Activated T-helper 2 cell treated with anti-CD3 and anti-CD28 coated beads, Interferon-gamma antibody, Interleukin-2, Interleukin-4, amounts not matched to agents 10 μg/mL and 5 μg/mL and 100 μg/mL, durations not matched to agents 14 hours and 24 hours and 36 hours (primary cell): ENCODE measurements at regions of chr10 and their contacts with region 1.

Region 1: GRCh38 chr10:102917962-102918816 is at the start of gene CNNM2:
- DNase-seq: peak; percentile 100
- H3K4me3 Mint-ChIP-seq: peak within 1 kb of the TSS; percentile 92
- H3K27ac Mint-ChIP-seq: peak within 1 kb of the TSS; percentile 88
- H3K4me1 Mint-ChIP-seq: peaks cover 47% of the 10 kb centered on the region
- H3K27me3 Mint-ChIP-seq: peaks cover 3% of the 10 kb centered on the region
- total RNA-seq, gene CNNM2: 7.2 and 7.5 TPM in 2 replicates

Region 2: DNA sequence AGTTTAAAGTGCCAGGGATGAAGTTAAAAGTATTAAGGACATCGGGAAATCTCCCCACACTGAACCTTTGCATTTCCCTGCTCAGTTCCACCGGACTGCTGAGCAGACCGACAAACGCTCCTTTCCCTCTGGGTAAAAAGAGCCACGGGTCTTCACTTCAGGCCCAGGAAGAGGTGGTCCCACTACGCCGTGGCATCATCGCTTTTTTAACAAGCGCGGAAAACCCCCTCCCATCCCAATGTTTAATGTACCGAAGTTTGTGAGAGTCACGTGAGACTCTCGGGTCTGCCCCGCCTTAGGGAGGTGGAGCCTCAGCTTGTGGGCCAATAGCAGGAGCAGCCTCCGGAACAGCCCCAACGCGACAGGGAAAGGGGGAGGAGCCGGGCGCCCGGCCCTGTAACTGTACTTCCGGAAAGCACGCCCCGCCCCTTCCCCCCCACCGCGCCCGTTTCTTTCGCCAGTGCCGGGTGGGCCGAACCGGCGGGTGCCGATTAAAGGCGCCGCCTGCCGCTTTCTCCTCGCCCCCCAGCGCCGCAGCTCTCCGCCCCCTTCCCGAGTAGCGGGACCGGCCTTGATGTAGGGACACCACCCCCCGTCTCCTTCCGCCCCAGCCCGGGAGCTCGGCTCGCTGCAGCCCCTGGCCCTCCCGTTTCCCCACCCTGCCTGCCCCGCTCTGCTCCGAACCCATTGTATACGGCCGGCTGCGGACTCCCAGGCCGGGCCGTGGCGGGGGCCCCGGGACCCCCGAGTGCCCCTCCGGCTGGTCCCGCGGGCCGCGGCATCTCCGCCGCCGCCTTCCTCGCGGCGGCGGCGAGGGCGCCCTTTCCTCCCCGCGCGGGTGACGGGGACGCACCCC is 276.1 kb before region 1 on chr10:
- intact Hi-C with region 1: loop called (anchors 5 kb)
- DNase-seq: peak; percentile 94
- H3K4me3 Mint-ChIP-seq: peak overlapping the region; percentile 85
- H3K27ac Mint-ChIP-seq: peak overlapping the region; percentile 88
- H3K4me1 Mint-ChIP-seq: peaks cover 18% of the 10 kb centered on the region
- H3K27me3 Mint-ChIP-seq: no peaks in the 10 kb centered on the region

Region 3: GRCh38 chr10:102853944-102854694 is 64.1 kb before region 1 on chr10 and contains the start of gene BORCS7:
- intact Hi-C with region 1: loop called (anchors 1 kb)
- DNase-seq: peak; percentile 86
- H3K4me3 Mint-ChIP-seq: peak within 1 kb of the TSS; percentile 93
- H3K27ac Mint-ChIP-seq: peak within 1 kb of the TSS; percentile 96
- H3K4me1 Mint-ChIP-seq: peaks cover 16% of the 10 kb centered on the region
- H3K27me3 Mint-ChIP-seq: no peaks in the 10 kb centered on the region
- total RNA-seq, gene BORCS7: 10.4 and 10.7 TPM in 2 replicates

Region 4: DNA sequence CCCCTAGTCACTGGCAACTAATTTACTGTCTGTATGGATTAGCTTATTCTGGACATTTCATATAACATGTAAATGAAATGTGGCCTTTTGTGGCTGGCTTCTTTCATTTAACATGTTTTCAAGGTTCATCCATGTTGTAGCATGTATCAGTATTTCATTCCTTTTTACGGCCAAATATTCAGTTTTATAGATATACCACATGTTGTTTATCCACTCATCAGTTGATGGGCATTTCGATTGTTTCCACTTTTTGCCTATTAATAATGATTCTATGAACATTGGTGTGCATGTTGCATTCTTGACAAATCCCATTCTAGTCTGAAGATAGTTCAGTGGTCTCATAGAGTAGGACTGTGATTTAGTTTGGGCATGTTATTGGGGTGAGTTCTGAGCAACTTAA is 12.5 kb after region 1 on chr10:
- intact Hi-C with region 1: no loop called
- DNase-seq: no peak
- H3K4me3 Mint-ChIP-seq: no peak overlapping the region
- H3K27ac Mint-ChIP-seq: no peak overlapping the region
- H3K4me1 Mint-ChIP-seq: peaks cover 10% of the 10 kb centered on the region
- H3K27me3 Mint-ChIP-seq: no peaks in the 10 kb centered on the region

Region 5: GRCh38 chr10:103053659-103054581 is 135.7 kb after region 1 on chr10:
- intact Hi-C with region 1: loop called (anchors 1 kb)
- DNase-seq: peak; percentile 75
- H3K4me3 Mint-ChIP-seq: peak overlapping the region; percentile 80
- H3K27ac Mint-ChIP-seq: peak overlapping the region; percentile 89
- H3K4me1 Mint-ChIP-seq: peaks cover 25% of the 10 kb centered on the region
- H3K27me3 Mint-ChIP-seq: no peaks in the 10 kb centered on the region

Region 6: GRCh38 chr10:103244663-103245271 is 326.6 kb after region 1 on chr10:
- intact Hi-C with region 1: loop called (anchors 1 kb)
- DNase-seq: peak; percentile 46
- H3K4me3 Mint-ChIP-seq: no peak overlapping the region
- H3K27ac Mint-ChIP-seq: no peak overlapping the region
- H3K4me1 Mint-ChIP-seq: peaks cover 14% of the 10 kb centered on the region
- H3K27me3 Mint-ChIP-seq: no peaks in the 10 kb centered on the region